ENCODE measurements at regions of chr11 and their contacts with region 1.

Region 1: GRCh38 chr11:59534676-59535075 is 23.3 kb downstream of the OR4D9 start:
- DNase-seq: no peak
- H3K4me3 ChIP-seq: no peak overlapping the region
- H3K27ac ChIP-seq: no peak overlapping the region
- H3K4me1 ChIP-seq: peaks cover 6% of the 10 kb centered on the region
- CTCF ChIP-seq: no peak

Region 2: DNA sequence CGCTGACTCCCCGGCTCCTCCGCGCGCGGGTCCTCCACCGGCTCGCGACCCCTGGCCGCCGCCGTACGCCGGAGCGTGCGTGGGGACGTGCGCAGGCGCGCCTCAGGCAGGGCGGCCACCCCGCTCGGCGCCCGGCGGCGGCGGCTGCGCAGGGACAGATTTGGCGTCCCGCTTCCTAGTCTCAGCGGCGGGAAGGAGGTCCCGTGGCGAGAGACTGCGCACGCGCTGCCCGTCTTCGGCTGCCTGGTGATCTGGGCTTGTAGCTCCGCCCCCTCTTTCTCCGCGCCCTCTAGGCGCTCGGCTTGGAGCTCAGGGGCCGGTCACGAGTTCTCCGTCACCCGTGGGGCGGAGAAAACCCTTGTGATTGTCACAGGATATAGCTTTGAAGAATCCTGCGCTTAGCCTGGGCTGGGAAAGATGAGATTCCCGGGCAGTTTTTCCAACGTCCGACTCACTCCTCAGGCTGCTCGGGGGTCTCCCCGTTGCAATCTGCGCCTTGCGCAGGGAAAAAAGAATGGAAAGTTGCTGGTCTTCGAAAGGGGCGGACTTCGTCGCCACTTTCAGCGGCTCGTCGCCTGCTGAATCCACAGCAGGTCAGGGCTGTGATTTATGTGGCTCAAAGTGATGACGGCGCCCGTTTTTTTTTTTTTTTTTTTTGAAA is 134.4 kb after region 1 on chr11 and contains the start of gene PATL1:
- CTCF ChIA-PET with region 1: no interaction called
- POLR2A ChIA-PET with region 1: interaction called, 6 read pairs
- intact Hi-C with region 1: loop called (anchors 5 kb)
- DNase-seq: peak; percentile 98
- H3K4me3 ChIP-seq: peak within 1 kb of the TSS; percentile 99
- H3K27ac ChIP-seq: peak within 1 kb of the TSS; percentile 47
- H3K4me1 ChIP-seq: peaks cover 19% of the 10 kb centered on the region
- CTCF ChIP-seq: no peak
- total RNA-seq, gene PATL1: 14.7 and 15.2 TPM in 2 replicates

Measured in OCI-LY7 (cell line).